A673 (cell line): ENCODE measurements at regions of chr1 and their contacts with region 1.

Region 1: DNA sequence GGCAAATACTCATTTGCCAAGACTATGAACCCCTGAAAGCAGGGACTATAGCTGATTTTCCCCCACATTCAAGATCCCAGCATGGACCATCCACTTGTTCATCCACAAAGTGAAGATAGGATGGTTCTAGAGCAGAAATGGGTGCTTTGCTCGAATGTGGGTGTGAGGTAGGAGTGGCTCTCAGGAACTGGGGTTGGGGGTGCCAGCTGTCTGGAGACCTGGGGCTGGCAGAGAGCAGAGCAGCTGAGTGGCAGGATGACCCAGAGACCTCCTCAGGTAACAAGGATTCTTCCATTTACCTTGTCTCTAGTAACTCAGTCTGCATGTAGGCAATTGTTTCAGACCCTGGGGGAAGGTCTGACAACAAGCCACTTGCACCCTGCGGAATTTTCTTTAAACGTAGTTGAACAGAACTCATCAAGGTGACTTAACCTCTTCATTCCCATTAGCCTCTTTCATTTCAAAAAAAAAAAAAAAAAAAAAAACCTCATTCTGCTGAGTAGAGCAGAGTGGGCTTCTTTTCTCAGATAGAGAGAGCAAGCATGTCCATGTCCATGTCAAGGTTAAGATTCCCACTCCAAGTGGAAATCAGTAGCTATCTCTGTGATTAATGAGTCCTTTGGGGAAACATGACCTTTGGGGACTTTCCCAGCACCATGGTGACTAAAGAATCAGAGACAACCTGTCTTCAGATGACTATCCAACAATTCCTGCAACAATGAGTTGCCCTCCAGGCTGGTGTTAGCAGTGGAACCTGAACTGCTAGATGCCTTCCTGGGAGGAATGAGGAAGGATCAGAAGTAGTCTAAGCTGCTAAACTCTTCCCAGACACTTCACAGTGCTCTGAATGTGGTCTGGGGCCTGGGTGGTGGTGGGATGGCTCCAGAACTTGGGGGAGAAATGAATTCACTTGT is 6.2 kb downstream of the S100A9 start:
- DNase-seq: no peak
- H3K4me3 ChIP-seq: no peak overlapping the region
- H3K27ac ChIP-seq: no peak overlapping the region
- H3K4me1 ChIP-seq: no peaks in the 10 kb centered on the region
- H3K27me3 ChIP-seq: peaks cover 40% of the 10 kb centered on the region
- CTCF ChIP-seq: no peak

Region 2: GRCh38 chr1:153475282-153475681 is 111.4 kb after region 1 on chr1:
- CTCF ChIA-PET with region 1: no interaction called
- POLR2A ChIA-PET with region 1: interaction called, 19 read pairs
- intact Hi-C with region 1: no loop called
- DNase-seq: no peak
- H3K4me3 ChIP-seq: no peak overlapping the region
- H3K27ac ChIP-seq: no peak overlapping the region
- H3K4me1 ChIP-seq: no peaks in the 10 kb centered on the region
- H3K27me3 ChIP-seq: peaks cover 30% of the 10 kb centered on the region
- CTCF ChIP-seq: no peak